AG04450 (cell line): ENCODE measurements at regions of chr2 and their contacts with region 1.

Region 1: DNA sequence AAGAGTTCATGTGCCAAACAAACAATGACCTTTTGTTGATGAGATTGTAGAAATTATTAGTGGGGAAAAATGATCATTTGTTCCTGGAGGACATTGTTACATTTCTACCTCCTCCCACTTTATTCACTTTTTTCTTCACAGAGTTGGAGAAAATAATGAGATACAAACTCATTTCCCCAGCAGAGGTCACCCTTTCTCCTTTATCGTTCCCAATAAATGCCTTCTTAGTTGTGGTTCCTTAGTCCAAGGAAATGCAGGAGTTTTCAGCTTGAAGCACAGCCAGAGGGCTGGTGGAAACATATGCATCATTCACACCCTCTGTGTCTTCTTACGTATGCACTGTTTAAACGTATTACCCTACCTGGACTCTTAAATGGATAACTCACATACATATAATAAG is 108.8 kb downstream of the SLC4A3 start:
- DNase-seq: peak; percentile 48
- H3K4me3 ChIP-seq: no peak overlapping the region
- H3K27ac ChIP-seq: no peak overlapping the region
- H3K27me3 ChIP-seq: no peaks in the 10 kb centered on the region
- CTCF ChIP-seq: peak; percentile 67

Region 2: GRCh38 chr2:219433666-219434467 is 302.3 kb before region 1 on chr2:
- CTCF ChIA-PET with region 1: no interaction called
- POLR2A ChIA-PET with region 1: no interaction called
- DNase-seq: no peak
- H3K4me3 ChIP-seq: no peak overlapping the region
- H3K27ac ChIP-seq: no peak overlapping the region
- H3K27me3 ChIP-seq: no peaks in the 10 kb centered on the region
- CTCF ChIP-seq: peak; percentile 57

Region 3: GRCh38 chr2:219543601-219544358 is 192.4 kb before region 1 on chr2 and contains the starts of genes CHPF and TMEM198:
- CTCF ChIA-PET with region 1: no interaction called
- POLR2A ChIA-PET with region 1: no interaction called
- DNase-seq: peak; percentile 95
- H3K4me3 ChIP-seq: peak within 1 kb of the TSS; percentile 75
- H3K27ac ChIP-seq: peak within 1 kb of the TSS; percentile 78
- H3K27me3 ChIP-seq: no peaks in the 10 kb centered on the region
- CTCF ChIP-seq: no peak
- polyA plus RNA-seq, gene CHPF: 24.4 and 37.2 TPM in 2 replicates
- polyA plus RNA-seq, gene TMEM198: 0.83 and 1.2 TPM in 2 replicates

Region 4: DNA sequence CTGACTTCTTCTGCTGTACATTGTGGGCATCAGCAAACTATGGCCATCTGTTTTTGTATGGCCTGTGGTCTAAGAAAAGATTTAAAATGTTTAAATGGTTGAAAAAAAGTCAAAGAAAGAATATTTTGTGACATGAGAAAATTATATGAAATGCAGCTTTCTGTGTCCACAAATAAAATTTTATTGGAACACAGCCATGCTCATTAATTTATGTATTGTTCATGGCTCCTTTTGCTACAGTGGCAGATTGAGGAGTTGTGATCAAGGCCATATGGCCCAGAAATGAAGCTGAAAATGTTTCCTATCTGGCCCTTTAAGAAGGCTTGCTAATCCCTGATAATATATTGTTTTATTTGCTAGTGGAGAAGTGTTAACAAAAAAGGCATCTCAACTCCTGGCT is 53.3 kb after region 1 on chr2:
- CTCF ChIA-PET with region 1: no interaction called
- POLR2A ChIA-PET with region 1: no interaction called
- DNase-seq: no peak
- H3K4me3 ChIP-seq: no peak overlapping the region
- H3K27ac ChIP-seq: no peak overlapping the region
- H3K27me3 ChIP-seq: no peaks in the 10 kb centered on the region
- CTCF ChIP-seq: no peak

Region 5: DNA sequence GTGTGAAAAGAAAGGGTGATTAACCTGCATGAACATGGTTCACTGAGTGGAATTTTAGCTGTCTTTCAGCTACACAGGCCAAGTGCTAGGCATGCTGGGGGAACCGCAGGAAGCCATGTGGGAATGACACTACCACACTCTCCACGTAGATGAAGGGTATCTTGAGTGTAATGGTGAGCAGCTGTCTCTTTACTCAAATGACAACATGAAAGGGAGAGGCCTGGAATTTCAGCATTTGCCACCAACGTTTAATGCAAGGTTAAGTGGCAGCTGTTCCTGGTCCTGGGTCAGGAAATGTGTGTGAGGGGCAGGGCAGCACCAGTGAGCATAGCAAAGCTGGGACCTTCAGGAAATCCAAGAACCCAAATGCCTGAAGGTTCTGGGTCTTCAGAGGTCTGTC is 479.6 kb after region 1 on chr2:
- CTCF ChIA-PET with region 1: no interaction called
- POLR2A ChIA-PET with region 1: no interaction called
- DNase-seq: no peak
- H3K4me3 ChIP-seq: no peak overlapping the region
- H3K27ac ChIP-seq: no peak overlapping the region
- H3K27me3 ChIP-seq: no peaks in the 10 kb centered on the region
- CTCF ChIP-seq: no peak

Region 6: DNA sequence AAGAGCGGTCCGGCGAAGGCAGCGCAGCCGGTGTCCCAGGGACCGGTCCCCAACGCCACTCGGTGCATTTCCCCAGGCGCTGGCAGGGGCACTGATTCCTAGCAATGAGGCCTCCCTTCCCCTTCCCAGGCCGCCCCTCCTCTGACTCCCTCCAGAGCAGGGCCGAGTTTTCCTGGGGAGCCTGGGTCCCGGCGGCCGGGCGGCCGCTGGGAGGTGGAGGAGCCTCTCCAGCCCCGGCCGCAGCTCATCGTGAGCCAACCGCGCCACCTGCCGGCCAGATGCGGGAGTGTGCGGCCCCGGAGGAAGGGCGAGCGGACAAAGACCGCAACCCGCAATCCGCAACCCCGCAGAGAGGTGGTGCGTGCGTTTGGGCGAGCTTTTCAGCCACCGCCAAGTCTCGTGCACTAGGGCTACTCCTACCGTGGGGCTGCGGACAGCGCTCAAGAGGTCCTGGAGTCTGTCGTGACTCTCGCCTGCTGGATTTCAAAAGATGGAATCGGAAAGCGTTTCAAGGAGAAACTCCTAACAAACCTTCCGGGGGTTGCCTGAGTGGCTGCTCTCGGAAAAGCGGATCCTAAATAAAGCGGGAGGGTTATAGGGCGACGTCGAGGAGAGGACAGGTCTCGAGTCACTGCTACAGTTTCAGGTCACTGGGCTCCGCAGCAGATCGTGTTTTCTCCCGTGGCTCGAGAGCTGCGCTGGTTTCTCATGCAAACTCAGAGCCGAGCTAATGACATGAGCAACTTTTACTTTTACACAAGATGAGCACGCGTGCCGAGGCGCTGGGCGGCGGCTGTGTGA is 1837.4 kb after region 1 on chr2:
- CTCF ChIA-PET with region 1: interaction called, 15 read pairs
- POLR2A ChIA-PET with region 1: interaction called, 3 read pairs
- DNase-seq: peak; percentile 50
- H3K4me3 ChIP-seq: peak overlapping the region; percentile 92
- H3K27ac ChIP-seq: peak overlapping the region; percentile 21
- H3K27me3 ChIP-seq: peaks cover 3% of the 10 kb centered on the region
- CTCF ChIP-seq: peak; percentile 95